Activated CD4-positive, alpha-beta T cell treated with anti-CD3 and anti-CD28 coated beads, Interleukin-2, amount 10 ng/mL, durations not matched to agents 7 days and 5 days (primary cell): ENCODE measurements at regions of chr10 and their contacts with region 1.

Region 1: GRCh38 chr10:101067356-101068083 is 5.7 kb downstream of the KAZALD1 start:
- DNase-seq: peak; percentile 83
- H3K4me3 Mint-ChIP-seq: peak overlapping the region; percentile 76
- H3K27ac Mint-ChIP-seq: no peak overlapping the region
- H3K4me1 Mint-ChIP-seq: peaks cover 30% of the 10 kb centered on the region
- H3K27me3 Mint-ChIP-seq: peaks cover 49% of the 10 kb centered on the region

Region 2: DNA sequence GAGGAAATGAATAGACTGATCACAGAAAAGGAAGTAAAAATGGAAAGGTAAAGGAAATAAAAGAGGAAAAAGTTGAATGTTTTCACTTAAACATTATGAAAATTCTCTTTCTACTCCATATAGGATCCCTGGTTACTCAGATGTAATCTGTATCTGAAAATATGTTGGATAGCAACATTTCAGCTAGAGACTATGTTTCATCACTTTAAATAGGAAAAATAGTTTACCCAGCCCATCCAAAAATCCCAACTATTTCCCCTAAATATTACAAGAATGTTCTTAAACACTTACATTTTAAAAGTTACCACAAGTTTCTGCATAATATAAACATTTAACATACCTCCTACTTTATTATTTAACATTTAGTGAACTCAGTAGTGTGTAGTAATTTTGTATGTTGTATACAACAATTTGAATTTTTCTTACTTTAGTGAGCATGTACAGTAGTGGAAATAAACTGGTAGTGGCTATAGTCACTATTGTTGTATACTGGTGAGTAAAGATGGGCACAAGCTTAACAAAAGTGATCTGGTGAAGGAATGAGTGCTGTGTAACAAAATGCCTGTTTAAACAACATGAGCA is 127.7 kb before region 1 on chr10:
- CTCF ChIA-PET with region 1: no interaction called
- POLR2A ChIA-PET with region 1: no interaction called
- DNase-seq: no peak
- H3K4me3 Mint-ChIP-seq: no peak overlapping the region
- H3K27ac Mint-ChIP-seq: no peak overlapping the region
- H3K4me1 Mint-ChIP-seq: peaks cover 16% of the 10 kb centered on the region
- H3K27me3 Mint-ChIP-seq: no peaks in the 10 kb centered on the region

Region 3: GRCh38 chr10:101050208-101051069 is 17.1 kb before region 1 on chr10:
- CTCF ChIA-PET with region 1: interaction called, 35 read pairs
- POLR2A ChIA-PET with region 1: interaction called, 3 read pairs
- DNase-seq: peak; percentile 79
- H3K4me3 Mint-ChIP-seq: no peak overlapping the region
- H3K27ac Mint-ChIP-seq: no peak overlapping the region
- H3K4me1 Mint-ChIP-seq: peaks cover 22% of the 10 kb centered on the region
- H3K27me3 Mint-ChIP-seq: peaks cover 48% of the 10 kb centered on the region